Activated CD4-positive, alpha-beta memory T cell treated with anti-CD3 and anti-CD28 coated beads, Interleukin-2, amount 10 ng/mL, durations not matched to agents 7 days and 5 days (primary cell): ENCODE measurements at regions of chr17 and their contacts with region 1.

Region 1: GRCh38 chr17:5584383-5585286 is at the start of gene NLRP1:
- DNase-seq: peak; percentile 97
- H3K4me3 Mint-ChIP-seq: peak within 1 kb of the TSS; percentile 98
- H3K27ac Mint-ChIP-seq: peak within 1 kb of the TSS; percentile 96
- H3K4me1 Mint-ChIP-seq: peaks cover 73% of the 10 kb centered on the region
- H3K27me3 Mint-ChIP-seq: peaks cover 6% of the 10 kb centered on the region
- total RNA-seq, gene NLRP1: 102 to 104 TPM

Region 2: DNA sequence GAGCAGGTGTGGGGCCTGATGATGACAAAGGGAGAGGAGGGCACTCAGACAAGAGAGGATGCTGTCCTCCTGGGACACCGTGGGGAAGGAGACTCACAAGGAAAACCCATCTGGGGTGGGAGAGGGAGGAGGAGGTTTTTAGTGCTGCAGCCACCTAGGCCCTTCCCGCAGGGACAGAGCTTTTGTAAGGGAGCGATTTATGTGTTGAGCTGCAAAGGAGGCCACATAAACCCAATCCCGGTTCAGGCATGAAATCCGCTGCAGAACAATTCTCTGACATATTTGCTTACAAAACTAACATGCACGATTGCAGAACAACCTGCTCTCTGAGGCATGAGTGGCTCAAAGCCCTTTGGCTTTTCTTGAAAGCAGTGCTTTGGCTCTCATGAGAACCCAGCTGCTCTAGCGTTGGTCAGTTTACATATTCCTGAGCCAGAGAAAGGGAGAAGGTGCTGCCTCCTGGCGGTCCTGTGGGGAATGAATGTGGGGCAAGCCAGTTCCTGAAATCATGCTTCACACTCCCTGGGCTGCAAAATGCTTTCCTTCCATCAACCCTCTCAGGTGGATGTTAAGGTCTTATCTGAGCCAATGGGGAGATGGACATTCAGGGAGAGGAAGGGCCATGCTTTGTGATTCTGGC is 122.1 kb after region 1 on chr17:
- CTCF ChIA-PET with region 1: interaction called, 12 read pairs
- POLR2A ChIA-PET with region 1: interaction called, 4 read pairs
- DNase-seq: peak; percentile 61
- H3K4me3 Mint-ChIP-seq: no peak overlapping the region
- H3K27ac Mint-ChIP-seq: no peak overlapping the region
- H3K4me1 Mint-ChIP-seq: no peaks in the 10 kb centered on the region
- H3K27me3 Mint-ChIP-seq: peaks cover 21% of the 10 kb centered on the region